ENCODE measurements at regions of chr19 and their contacts with region 1.

Region 1: DNA sequence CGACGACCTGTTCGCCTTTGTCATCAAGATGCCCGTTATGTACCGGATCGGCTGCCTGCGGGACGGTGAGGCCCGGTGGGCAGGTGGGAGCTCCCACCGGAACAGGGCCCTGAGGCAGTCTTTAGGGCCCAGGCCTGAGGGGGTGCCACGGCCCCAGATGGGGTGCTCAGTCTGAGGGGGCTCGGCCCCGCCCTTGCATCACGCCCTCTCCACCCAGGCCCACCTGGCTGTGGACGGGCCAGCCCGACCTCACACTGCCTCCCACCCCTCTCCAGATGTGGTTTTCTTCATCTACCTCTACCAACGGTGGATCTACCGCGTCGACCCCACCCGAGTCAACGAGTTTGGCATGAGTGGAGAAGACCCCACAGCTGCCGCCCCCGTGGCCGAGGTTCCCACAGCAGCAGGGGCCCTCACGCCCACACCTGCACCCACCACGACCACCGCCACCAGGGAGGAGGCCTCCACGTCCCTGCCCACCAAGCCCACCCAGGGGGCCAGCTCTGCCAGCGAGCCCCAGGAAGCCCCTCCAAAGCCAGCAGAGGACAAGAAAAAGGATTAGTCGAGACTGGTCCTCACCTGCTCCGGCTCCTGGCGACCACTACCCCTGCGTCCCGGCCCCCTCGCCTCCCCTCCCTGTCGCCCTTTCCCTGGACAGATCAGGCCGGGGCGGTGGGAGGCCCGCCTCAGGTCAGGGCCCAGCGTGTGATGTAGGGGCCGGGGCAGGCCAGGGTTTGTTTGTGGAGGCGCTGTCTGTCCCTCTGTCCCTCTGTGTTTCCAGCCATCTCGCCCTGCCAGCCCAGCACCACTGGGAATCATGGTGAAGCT is 8.7 kb upstream of the RELB start:
- DNase-seq: no peak

Region 2: GRCh38 chr19:43101950-43102349 is 1890.6 kb before region 1 on chr19:
- intact Hi-C with region 1: no loop called
- DNase-seq: no peak

Region 3: GRCh38 chr19:45016388-45017319 is 24.1 kb after region 1 on chr19:
- intact Hi-C with region 1: loop called in 1 of 2 experiments (anchors 1 kb)
- DNase-seq: no peak

Region 4: GRCh38 chr19:45027371-45027770 is 34.8 kb after region 1 on chr19:
- intact Hi-C with region 1: no loop called
- DNase-seq: no peak

Region 5: DNA sequence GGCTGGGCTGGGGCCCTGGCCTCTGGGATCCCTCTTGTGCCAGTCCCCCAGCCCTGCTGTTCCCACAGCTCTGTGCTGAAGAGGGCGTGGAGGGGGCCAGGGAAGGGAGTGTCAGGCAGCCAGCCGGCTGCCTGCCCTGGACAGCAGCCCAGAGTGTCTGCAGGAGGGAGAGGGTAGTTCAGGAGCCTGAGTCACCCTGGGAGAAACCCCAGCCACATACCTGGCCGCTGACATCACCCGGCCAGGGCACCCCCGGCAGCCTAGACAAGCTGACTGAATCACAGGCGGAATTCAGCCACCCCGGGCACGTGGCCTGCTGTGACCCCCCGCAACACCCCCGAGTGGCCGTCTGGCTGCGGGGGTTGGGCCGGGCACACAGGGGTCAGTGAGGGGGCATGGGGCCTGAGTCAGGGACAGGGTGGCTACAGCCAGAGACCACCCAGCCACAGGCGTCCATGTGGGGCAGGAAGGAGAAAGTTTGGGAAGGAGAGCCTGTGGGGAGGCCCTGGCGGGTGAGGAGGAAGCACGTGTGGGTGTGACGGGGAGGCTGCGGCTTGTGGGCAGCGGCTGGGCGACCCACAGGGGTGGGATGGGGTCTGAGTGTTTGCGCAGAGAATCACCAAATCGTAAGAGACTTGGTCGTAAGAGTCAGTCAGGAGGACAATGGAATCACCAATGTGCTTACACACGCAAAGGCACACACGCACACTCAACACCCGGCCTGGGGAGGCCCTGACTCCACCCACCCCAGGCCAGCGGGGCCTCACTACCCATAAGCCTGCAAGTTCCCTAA is 463.4 kb after region 1 on chr19:
- intact Hi-C with region 1: no loop called
- DNase-seq: peak; percentile 98

Measured in posterior vena cava (tissue), 2 donors.